Heart right ventricle (tissue), 16 donors: ENCODE measurements at regions of chr13 and their contacts with region 1.

Region 1: DNA sequence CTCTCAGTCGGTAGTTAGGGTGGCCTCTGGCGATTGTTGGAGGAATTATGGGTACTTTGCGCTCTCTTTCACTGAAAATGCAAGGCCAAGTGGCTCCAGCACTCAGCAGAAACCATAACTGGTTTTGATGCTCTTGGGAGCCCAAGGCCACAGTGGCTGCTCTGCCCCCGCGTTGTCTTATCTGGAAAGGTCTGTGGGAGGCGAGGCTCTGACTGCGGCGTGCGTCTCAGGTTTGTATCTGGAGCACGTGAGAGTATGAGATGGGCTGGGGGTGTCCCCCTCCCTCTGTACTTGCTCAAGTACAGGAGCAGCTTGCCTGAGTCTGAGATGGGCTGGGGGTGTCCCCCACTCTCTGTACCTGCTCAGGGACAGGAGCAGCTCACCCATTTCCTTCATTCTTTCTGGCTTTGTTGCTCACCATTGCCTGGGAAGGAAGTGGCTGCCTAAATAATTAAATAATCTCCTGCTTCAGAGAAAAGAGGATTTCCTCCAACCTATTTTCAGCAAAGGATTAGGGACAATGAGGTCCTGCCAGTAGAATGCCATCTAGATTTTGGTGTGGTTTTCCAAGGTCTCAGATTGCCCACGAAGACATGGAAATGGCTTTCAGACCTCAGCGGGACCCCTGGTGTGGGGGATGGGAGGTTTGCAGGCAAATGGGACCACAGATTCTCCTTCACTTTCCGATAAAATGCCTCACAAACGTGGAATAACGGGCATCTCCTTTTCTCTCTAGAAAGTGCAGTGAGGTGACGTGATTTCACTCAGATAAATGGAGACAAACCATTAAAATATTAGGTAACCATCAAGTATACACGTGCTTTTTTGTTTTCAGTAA is 14.7 kb downstream of the ATP11A start:
- DNase-seq: no peak
- ATAC-seq: peak in 6 of 8 donors; percentile 6 to 35 (median 24)
- H3K4me3 ChIP-seq: peak overlapping the region in 4 of 10 donors; percentile 1 to 22 (median 12)
- H3K27ac ChIP-seq: peak overlapping the region in 9 of 10 donors; percentile 24 to 81 (median 64)
- H3K4me1 ChIP-seq: peaks cover 3 to 71% (median 36%) of the 10 kb centered on the region in 9 donors
- H3K27me3 ChIP-seq: no peaks in the 10 kb centered on the region
- CTCF ChIP-seq: no peak

Region 2: GRCh38 chr13:112740502-112741131 is 36.1 kb after region 1 on chr13:
- intact Hi-C with region 1: loop called in 1 of 10 experiments (anchors 5 kb)
- DNase-seq: peak; percentile 79 to 89
- ATAC-seq: peak; percentile 67 to 93 (median 86)
- H3K4me3 ChIP-seq: peak overlapping the region in 6 of 10 donors; percentile 10 to 40 (median 33)
- H3K27ac ChIP-seq: peak overlapping the region; percentile 47 to 93 (median 76)
- H3K4me1 ChIP-seq: peaks cover 10 to 59% (median 37%) of the 10 kb centered on the region in 9 donors
- H3K27me3 ChIP-seq: no peaks in the 10 kb centered on the region
- CTCF ChIP-seq: no peak